Natural killer cell (primary cell): ENCODE measurements at regions of chr1 and their contacts with region 1.

Region 1: DNA sequence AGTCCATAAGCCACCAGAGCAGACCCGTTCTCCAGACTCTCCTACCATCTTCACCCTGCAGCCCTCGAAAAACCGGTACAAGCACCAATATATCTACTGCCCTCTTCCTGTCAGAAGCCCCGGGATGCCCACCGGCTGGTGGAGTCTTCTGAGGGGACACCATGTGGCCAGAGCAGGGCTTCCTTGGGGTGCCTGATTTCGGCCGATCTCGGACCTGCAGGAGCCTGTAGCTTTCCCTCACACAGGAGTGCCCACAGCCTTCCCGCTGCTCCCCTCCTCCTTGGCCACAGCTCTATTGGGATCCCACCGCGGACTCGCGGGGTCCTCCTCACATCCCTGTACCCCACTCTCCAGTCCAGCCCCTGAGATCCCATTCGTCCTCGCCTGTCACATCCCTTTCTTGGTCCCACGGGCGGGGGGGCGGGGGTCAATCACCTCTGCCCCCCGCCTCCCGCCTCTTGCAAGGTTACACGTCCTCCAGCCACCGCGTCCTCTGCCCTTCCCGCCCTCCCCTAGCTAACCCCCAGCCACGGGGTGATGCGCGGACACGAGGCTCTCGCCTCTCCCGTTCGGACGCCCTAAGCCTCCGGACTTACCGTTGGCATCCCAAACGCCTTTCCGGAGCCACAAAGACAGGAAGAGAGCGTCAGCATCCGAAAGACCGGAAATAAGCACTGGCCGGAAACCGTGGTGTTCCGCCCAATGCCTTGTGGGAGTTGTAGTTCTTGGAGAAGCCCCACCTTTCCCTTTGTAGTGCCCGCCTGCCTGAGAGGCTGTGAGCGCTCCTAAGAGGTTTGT is at the start of gene SSR2:
- DNase-seq: peak; percentile 71 to 93
- ATAC-seq: peak; percentile 98 to 100 (median 99)
- H3K4me3 ChIP-seq: peak within 1 kb of the TSS; percentile 64
- H3K4me3 Mint-ChIP-seq: peak within 1 kb of the TSS; percentile 80
- H3K27ac ChIP-seq: peak within 1 kb of the TSS; percentile 52
- H3K27ac Mint-ChIP-seq: peak within 1 kb of the TSS; percentile 76 to 92
- H3K4me1 ChIP-seq: peaks cover 13% of the 10 kb centered on the region
- H3K4me1 Mint-ChIP-seq: peaks cover 17 to 21% of the 10 kb centered on the region in 2 donors
- H3K27me3 ChIP-seq: no peaks in the 10 kb centered on the region
- H3K27me3 Mint-ChIP-seq: peaks cover 7% of the 10 kb centered on the region in 2 donors
- CTCF ChIP-seq: no peak
- total RNA-seq, gene SSR2: 209 to 215 (median 211) TPM

Region 2: DNA sequence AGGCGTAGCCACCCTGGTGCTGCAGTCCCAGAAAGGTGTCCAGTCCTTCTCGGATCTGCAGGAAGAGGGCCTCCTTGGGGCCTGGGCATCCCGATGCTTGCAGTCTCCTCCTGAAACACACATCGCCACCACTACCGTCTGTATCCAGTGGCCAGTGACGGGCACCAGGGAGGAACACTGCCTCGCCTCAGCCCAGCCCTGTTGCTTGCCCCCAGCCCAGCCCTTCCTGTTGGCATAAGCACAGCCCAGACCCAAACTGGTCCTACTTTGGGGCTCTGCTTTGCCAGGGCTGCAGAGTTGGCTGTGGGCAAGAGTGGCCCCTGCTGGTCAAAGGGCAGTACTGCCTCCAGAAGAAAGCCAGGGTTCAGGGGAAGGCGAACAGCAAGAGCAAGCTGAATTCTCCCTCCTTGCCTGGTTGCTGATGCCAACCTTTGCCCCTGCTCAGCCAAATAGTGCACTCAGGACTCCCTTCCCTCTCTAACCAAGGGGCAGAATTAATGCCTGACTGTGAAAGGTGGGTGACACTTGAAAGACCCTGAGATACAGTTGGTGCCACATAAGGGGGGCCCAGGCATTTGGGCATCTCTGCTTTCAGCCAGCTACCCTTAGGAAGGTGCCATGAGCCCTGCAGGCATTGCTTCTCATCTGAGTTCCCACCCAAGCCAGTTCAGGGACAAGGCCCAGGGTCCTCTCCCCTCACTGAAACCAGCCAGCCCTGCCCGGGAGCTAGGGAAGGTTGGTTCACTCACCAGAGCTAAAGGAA is 31.1 kb before region 1 on chr1:
- intact Hi-C with region 1: no loop called
- DNase-seq: peak; percentile 75 to 91
- ATAC-seq: peak; percentile 97 to 100 (median 99)
- H3K4me3 ChIP-seq: no peak overlapping the region
- H3K4me3 Mint-ChIP-seq: no peak overlapping the region
- H3K27ac ChIP-seq: peak overlapping the region; percentile 17
- H3K27ac Mint-ChIP-seq: peak overlapping the region in 1 of 2 donors; percentile 57
- H3K4me1 ChIP-seq: peaks cover 23% of the 10 kb centered on the region
- H3K4me1 Mint-ChIP-seq: peaks cover 11 to 12% of the 10 kb centered on the region in 2 donors
- H3K27me3 ChIP-seq: no peaks in the 10 kb centered on the region
- H3K27me3 Mint-ChIP-seq: no peaks in the 10 kb centered on the region
- CTCF ChIP-seq: peak; percentile 98

Region 3: GRCh38 chr1:156054500-156055280 is 34.2 kb after region 1 on chr1 and contains the start of gene LAMTOR2:
- intact Hi-C with region 1: loop called (anchors 1 kb)
- DNase-seq: peak; percentile 93 to 95
- ATAC-seq: peak; percentile 78 to 91 (median 83)
- H3K4me3 ChIP-seq: peak within 1 kb of the TSS; percentile 70
- H3K4me3 Mint-ChIP-seq: peak within 1 kb of the TSS; percentile 98
- H3K27ac ChIP-seq: peak within 1 kb of the TSS; percentile 84
- H3K27ac Mint-ChIP-seq: peak within 1 kb of the TSS; percentile 89 to 93
- H3K4me1 ChIP-seq: peaks cover 27% of the 10 kb centered on the region
- H3K4me1 Mint-ChIP-seq: peaks cover 31 to 33% of the 10 kb centered on the region in 2 donors
- H3K27me3 ChIP-seq: no peaks in the 10 kb centered on the region
- H3K27me3 Mint-ChIP-seq: no peaks in the 10 kb centered on the region
- CTCF ChIP-seq: no peak
- total RNA-seq, gene LAMTOR2: 23.5 to 26.1 (median 24.6) TPM